ENCODE measurements at regions of chr11 and their contacts with region 1.

Region 1: GRCh38 chr11:29260939-29261705 is 755.7 kb downstream of the KCNA4 start:
- DNase-seq: peak; percentile 40 to 49
- H3K4me3 ChIP-seq: no peak overlapping the region
- H3K4me3 Mint-ChIP-seq: no peak overlapping the region
- H3K27ac Mint-ChIP-seq: no peak overlapping the region
- H3K4me1 ChIP-seq: no peaks in the 10 kb centered on the region
- H3K4me1 Mint-ChIP-seq: peaks cover 6% of the 10 kb centered on the region
- H3K27me3 ChIP-seq: no peaks in the 10 kb centered on the region
- H3K27me3 Mint-ChIP-seq: no peaks in the 10 kb centered on the region
- CTCF ChIP-seq: peak in 1 of 2 experiments; percentile 49

Region 2: DNA sequence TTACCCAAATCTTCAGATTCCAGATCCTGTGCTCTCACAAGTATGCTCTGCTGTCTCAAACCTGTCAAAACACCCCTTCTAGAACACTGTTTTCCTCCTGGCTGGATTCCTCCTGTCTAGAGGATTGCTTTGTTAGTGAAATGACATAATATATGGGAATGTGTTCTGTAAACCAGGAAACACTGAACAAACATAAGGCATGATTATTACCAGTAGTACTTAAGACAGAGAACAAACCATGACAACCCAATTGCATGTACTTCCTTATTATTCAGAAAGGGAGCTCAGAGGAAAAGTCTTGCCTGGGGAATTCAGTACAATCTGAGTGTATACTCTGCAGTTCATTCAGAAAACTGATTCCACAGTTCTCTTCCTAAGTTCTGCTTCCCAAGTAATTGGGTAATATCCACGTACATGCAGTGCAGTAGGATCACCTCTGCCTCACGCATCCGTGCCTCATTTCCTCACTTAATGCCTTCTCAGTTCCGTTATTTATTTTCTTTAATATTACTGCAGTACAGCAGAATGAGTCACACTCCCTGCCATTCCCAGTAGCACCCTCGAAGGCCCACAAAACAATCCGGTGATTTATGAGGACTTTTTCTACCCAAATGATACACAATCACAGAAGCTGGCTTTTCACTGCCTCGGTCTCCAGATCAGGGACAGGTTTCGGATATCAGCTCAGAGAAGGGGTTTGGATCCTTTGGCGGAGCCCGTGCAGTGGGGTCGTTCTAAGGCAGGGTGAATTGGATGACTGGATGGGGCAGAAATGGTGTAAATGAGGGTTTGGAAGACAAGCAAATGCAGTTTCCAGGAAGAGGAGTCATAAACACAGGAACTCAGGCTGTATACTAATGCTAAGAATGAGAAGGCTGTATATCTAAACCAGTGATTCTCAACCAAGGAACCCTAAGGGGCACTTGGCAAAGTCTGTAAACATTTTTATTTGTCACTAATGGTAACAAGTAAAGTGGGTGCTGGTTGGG is 141.1 kb before region 1 on chr11:
- CTCF ChIA-PET with region 1: no interaction called
- POLR2A ChIA-PET with region 1: no interaction called
- intact Hi-C with region 1: no loop called
- DNase-seq: peak in 1 of 2 experiments; percentile 15
- H3K4me3 ChIP-seq: no peak overlapping the region
- H3K4me3 Mint-ChIP-seq: no peak overlapping the region
- H3K27ac Mint-ChIP-seq: peak overlapping the region; percentile 49
- H3K4me1 ChIP-seq: peaks cover 11% of the 10 kb centered on the region; the same call in 1 of the 2 replicates
- H3K4me1 Mint-ChIP-seq: peaks cover 11% of the 10 kb centered on the region
- H3K27me3 ChIP-seq: no peaks in the 10 kb centered on the region
- H3K27me3 Mint-ChIP-seq: no peaks in the 10 kb centered on the region
- CTCF ChIP-seq: no peak

Region 3: GRCh38 chr11:29328961-29329441 is 67.9 kb after region 1 on chr11:
- CTCF ChIA-PET with region 1: interaction called, 8 read pairs
- POLR2A ChIA-PET with region 1: no interaction called
- intact Hi-C with region 1: loop called (anchors 1 kb)
- DNase-seq: peak in 1 of 2 experiments; percentile 54
- H3K4me3 ChIP-seq: no peak overlapping the region
- H3K4me3 Mint-ChIP-seq: no peak overlapping the region
- H3K27ac Mint-ChIP-seq: no peak overlapping the region
- H3K4me1 ChIP-seq: peaks cover 13% of the 10 kb centered on the region
- H3K4me1 Mint-ChIP-seq: peaks cover 14% of the 10 kb centered on the region
- H3K27me3 ChIP-seq: no peaks in the 10 kb centered on the region
- H3K27me3 Mint-ChIP-seq: no peaks in the 10 kb centered on the region
- CTCF ChIP-seq: peak; percentile 70 to 78